Ovary (tissue), 10 donors: ENCODE measurements at regions of chr15 and their contacts with region 1.

Region 1: DNA sequence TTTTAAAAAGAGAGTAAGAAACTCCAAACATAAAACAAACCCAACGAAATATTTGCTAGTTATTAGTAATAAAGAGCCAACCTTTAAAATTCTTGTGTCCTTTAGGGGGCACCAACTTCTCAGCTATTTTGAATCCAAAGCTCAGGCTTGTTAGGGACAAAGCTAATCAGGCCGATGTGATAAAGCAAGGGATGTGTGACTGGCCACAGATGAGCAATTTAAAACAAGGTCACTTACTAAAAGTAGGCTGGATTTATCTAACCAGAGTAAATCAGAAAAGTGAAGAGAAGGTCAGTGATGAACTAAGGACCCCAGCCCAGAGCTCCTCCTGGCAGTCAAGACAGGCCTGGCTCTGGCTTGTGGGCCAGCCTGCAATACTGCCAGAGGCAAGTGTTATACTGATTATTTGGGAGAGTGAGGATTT is 108.5 kb downstream of the CYP19A1 start:
- DNase-seq: no peak
- H3K4me3 ChIP-seq: no peak overlapping the region
- H3K27ac ChIP-seq: no peak overlapping the region
- H3K4me1 ChIP-seq: no peaks in the 10 kb centered on the region
- H3K27me3 ChIP-seq: no peaks in the 10 kb centered on the region
- CTCF ChIP-seq: peak in 1 of 3 donors; percentile 41
- EP300 ChIP-seq: no peak
- POLR2A ChIP-seq: no peak

Region 2: GRCh38 chr15:51390966-51391432 is 161.1 kb after region 1 on chr15:
- intact Hi-C with region 1: loop called in 1 of 4 experiments (anchors 10 kb)
- DNase-seq: no peak
- H3K4me3 ChIP-seq: no peak overlapping the region
- H3K27ac ChIP-seq: peak overlapping the region in 1 of 2 donors; percentile 16
- H3K4me1 ChIP-seq: peaks cover 6% of the 10 kb centered on the region
- H3K27me3 ChIP-seq: no peaks in the 10 kb centered on the region
- CTCF ChIP-seq: no peak
- EP300 ChIP-seq: no peak
- POLR2A ChIP-seq: no peak